Activated CD8-positive, alpha-beta T cell treated with anti-CD3 and anti-CD28 coated beads, Interleukin-2, amount 10 ng/mL, durations not matched to agents 7 days and 5 days (primary cell): ENCODE measurements at regions of chr2 and their contacts with region 1.

Region 1: GRCh38 chr2:69572641-69573040 is 70.9 kb downstream of the AAK1 start:
- DNase-seq: no peak
- ATAC-seq: no peak
- H3K4me3 Mint-ChIP-seq: no peak overlapping the region
- H3K27ac Mint-ChIP-seq: peak overlapping the region; percentile 16
- H3K4me1 Mint-ChIP-seq: peaks cover 55% of the 10 kb centered on the region
- H3K27me3 Mint-ChIP-seq: no peaks in the 10 kb centered on the region

Region 2: DNA sequence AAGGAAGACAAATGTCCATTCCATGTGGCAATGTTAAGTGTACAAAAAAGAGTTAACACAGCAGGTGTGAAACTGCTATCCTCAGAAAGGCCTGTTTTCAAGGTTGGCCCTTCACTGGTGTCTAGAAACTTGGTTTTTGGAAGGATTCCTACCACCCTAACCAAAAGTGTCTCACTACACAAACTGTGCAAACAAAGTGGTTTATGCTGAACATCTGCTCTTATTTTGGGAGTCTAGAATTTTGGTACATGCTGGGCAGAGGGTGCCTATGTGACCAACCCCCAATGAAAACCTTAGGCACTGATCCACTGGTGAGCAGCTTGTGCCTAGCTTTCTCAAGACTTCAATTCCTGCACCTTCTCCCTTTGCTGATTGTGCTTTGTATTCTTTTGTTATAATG is 199.9 kb before region 1 on chr2:
- CTCF ChIA-PET with region 1: no interaction called
- POLR2A ChIA-PET with region 1: no interaction called
- DNase-seq: no peak
- ATAC-seq: no peak
- H3K4me3 Mint-ChIP-seq: no peak overlapping the region
- H3K27ac Mint-ChIP-seq: no peak overlapping the region
- H3K4me1 Mint-ChIP-seq: peaks cover 10% of the 10 kb centered on the region
- H3K27me3 Mint-ChIP-seq: no peaks in the 10 kb centered on the region

Region 3: GRCh38 chr2:69535817-69536241 is 36.8 kb before region 1 on chr2:
- CTCF ChIA-PET with region 1: no interaction called
- POLR2A ChIA-PET with region 1: no interaction called
- DNase-seq: no peak
- ATAC-seq: no peak
- H3K4me3 Mint-ChIP-seq: no peak overlapping the region
- H3K27ac Mint-ChIP-seq: peak overlapping the region; percentile 8
- H3K4me1 Mint-ChIP-seq: peaks cover 20% of the 10 kb centered on the region
- H3K27me3 Mint-ChIP-seq: no peaks in the 10 kb centered on the region

Region 4: GRCh38 chr2:69559442-69560146 is 13.0 kb before region 1 on chr2:
- CTCF ChIA-PET with region 1: interaction called, 219 read pairs
- POLR2A ChIA-PET with region 1: no interaction called
- DNase-seq: no peak
- ATAC-seq: peak; percentile 54
- H3K4me3 Mint-ChIP-seq: no peak overlapping the region
- H3K27ac Mint-ChIP-seq: no peak overlapping the region
- H3K4me1 Mint-ChIP-seq: peaks cover 48% of the 10 kb centered on the region
- H3K27me3 Mint-ChIP-seq: no peaks in the 10 kb centered on the region

Region 5: GRCh38 chr2:69639266-69639665 is 66.6 kb after region 1 on chr2:
- CTCF ChIA-PET with region 1: no interaction called
- POLR2A ChIA-PET with region 1: no interaction called
- DNase-seq: no peak
- ATAC-seq: no peak
- H3K4me3 Mint-ChIP-seq: peak overlapping the region; percentile 22
- H3K27ac Mint-ChIP-seq: no peak overlapping the region
- H3K4me1 Mint-ChIP-seq: peaks cover 52% of the 10 kb centered on the region
- H3K27me3 Mint-ChIP-seq: no peaks in the 10 kb centered on the region